Activated CD8-positive, alpha-beta T cell treated with anti-CD3 and anti-CD28 coated beads, Interleukin-2, amount 10 ng/mL, durations not matched to agents 7 days and 5 days (primary cell): ENCODE measurements at regions of chr3 and their contacts with region 1.

Region 1: DNA sequence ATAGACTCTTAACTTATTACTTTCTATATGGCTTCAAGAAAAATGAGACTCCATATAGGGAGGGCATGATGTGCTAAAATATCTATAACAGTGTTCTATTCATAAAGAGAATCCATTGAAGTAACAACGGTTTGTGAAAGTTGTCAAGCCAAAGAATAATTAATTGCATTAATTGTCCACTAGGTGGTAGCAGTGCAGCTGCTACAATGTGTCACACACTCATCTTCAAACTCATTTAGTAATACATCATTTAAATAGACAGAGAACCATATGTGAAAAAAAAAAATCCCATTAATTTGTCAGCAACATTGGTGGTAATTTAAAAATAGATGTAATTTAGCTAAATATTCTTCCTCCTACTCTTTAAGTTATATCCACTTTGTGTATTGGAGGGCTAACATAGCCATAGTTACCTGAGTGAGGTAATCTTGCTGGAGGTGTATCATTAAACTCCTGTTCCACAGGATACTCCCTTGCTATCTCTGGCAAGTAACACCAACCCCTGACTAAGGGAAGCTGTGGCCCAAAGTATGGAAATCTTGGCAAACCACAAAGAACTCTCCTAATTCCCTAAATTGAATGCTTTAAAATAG is 3.7 kb upstream of the CPA3 start:
- DNase-seq: no peak
- ATAC-seq: no peak
- H3K4me3 Mint-ChIP-seq: no peak overlapping the region
- H3K27ac Mint-ChIP-seq: no peak overlapping the region
- H3K4me1 Mint-ChIP-seq: no peaks in the 10 kb centered on the region
- H3K27me3 Mint-ChIP-seq: peaks cover 9% of the 10 kb centered on the region

Region 2: GRCh38 chr3:148757238-148758215 is 103.8 kb before region 1 on chr3:
- CTCF ChIA-PET with region 1: no interaction called
- POLR2A ChIA-PET with region 1: no interaction called
- DNase-seq: no peak
- ATAC-seq: no peak
- H3K4me3 Mint-ChIP-seq: no peak overlapping the region
- H3K27ac Mint-ChIP-seq: no peak overlapping the region
- H3K4me1 Mint-ChIP-seq: no peaks in the 10 kb centered on the region
- H3K27me3 Mint-ChIP-seq: no peaks in the 10 kb centered on the region

Region 3: GRCh38 chr3:148943506-148944205 is 82.3 kb after region 1 on chr3:
- CTCF ChIA-PET with region 1: interaction called, 48 read pairs
- POLR2A ChIA-PET with region 1: no interaction called
- DNase-seq: peak; percentile 33
- ATAC-seq: peak; percentile 89
- H3K4me3 Mint-ChIP-seq: no peak overlapping the region
- H3K27ac Mint-ChIP-seq: no peak overlapping the region
- H3K4me1 Mint-ChIP-seq: no peaks in the 10 kb centered on the region
- H3K27me3 Mint-ChIP-seq: peaks cover 5% of the 10 kb centered on the region